Activated CD4-positive, alpha-beta T cell treated with anti-CD3 and anti-CD28 coated beads for 36 hours (primary cell): ENCODE measurements at regions of chr6 and their contacts with region 1.

Region 1: GRCh38 chr6:42390228-42390934 is 61.3 kb downstream of the TRERF1 start:
- DNase-seq: peak; percentile 85
- ATAC-seq: peak; percentile 89
- H3K4me3 Mint-ChIP-seq: peak overlapping the region; percentile 63
- H3K27ac Mint-ChIP-seq: peak overlapping the region; percentile 97
- H3K4me1 Mint-ChIP-seq: peaks cover 98% of the 10 kb centered on the region
- H3K27me3 Mint-ChIP-seq: no peaks in the 10 kb centered on the region

Region 2: GRCh38 chr6:42251500-42251899 is 138.9 kb before region 1 on chr6:
- CTCF ChIA-PET with region 1: no interaction called
- POLR2A ChIA-PET with region 1: no interaction called
- intact Hi-C with region 1: no loop called
- DNase-seq: no peak
- ATAC-seq: no peak
- H3K4me3 Mint-ChIP-seq: no peak overlapping the region
- H3K27ac Mint-ChIP-seq: no peak overlapping the region
- H3K4me1 Mint-ChIP-seq: peaks cover 5% of the 10 kb centered on the region
- H3K27me3 Mint-ChIP-seq: no peaks in the 10 kb centered on the region

Region 3: GRCh38 chr6:42352856-42353564 is 37.4 kb before region 1 on chr6:
- CTCF ChIA-PET with region 1: interaction called, 5 read pairs
- POLR2A ChIA-PET with region 1: interaction called, 10 read pairs
- intact Hi-C with region 1: loop called in 1 of 2 experiments (anchors 1 kb)
- DNase-seq: no peak
- ATAC-seq: no peak
- H3K4me3 Mint-ChIP-seq: no peak overlapping the region
- H3K27ac Mint-ChIP-seq: no peak overlapping the region
- H3K4me1 Mint-ChIP-seq: peaks cover 17% of the 10 kb centered on the region
- H3K27me3 Mint-ChIP-seq: no peaks in the 10 kb centered on the region

Region 4: DNA sequence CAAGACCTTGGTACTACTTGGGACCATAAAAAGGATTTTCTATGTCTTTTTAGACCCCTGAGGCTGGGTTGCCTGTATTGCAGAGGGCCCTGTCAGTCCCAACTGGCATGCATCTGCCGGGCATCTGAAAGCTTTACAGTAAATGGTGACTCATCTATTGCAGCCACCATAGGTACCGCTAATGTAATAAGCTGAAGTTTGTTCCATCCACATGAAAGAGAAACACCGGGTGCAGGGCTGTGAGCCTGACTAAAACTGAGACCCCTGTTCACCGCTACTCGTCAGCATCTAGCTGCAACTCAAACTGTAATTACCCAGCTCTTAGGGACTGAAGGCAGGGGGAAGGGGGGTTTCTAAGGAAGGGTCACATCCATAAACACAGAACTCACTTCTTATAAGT is 11.8 kb after region 1 on chr6:
- CTCF ChIA-PET with region 1: interaction called, 16 read pairs
- POLR2A ChIA-PET with region 1: interaction called, 11 read pairs
- intact Hi-C with region 1: loop called (anchors 1 kb)
- DNase-seq: peak; percentile 78
- ATAC-seq: peak; percentile 85
- H3K4me3 Mint-ChIP-seq: peak overlapping the region; percentile 18
- H3K27ac Mint-ChIP-seq: peak overlapping the region; percentile 69
- H3K4me1 Mint-ChIP-seq: peaks cover 83% of the 10 kb centered on the region
- H3K27me3 Mint-ChIP-seq: no peaks in the 10 kb centered on the region

Region 5: GRCh38 chr6:42453031-42453653 is 62.8 kb after region 1 on chr6:
- CTCF ChIA-PET with region 1: interaction called, 6 read pairs
- POLR2A ChIA-PET with region 1: interaction called, 7 read pairs
- intact Hi-C with region 1: loop called (anchors 1 to 5 kb)
- DNase-seq: peak; percentile 87
- ATAC-seq: peak; percentile 76
- H3K4me3 Mint-ChIP-seq: peak overlapping the region; percentile 83
- H3K27ac Mint-ChIP-seq: no peak overlapping the region
- H3K4me1 Mint-ChIP-seq: peaks cover 34% of the 10 kb centered on the region
- H3K27me3 Mint-ChIP-seq: peaks cover 5% of the 10 kb centered on the region

Region 6: GRCh38 chr6:42745707-42746462 is 355.5 kb after region 1 on chr6 and contains the start of gene TBCC:
- CTCF ChIA-PET with region 1: no interaction called
- POLR2A ChIA-PET with region 1: no interaction called
- intact Hi-C with region 1: no loop called
- DNase-seq: peak; percentile 97
- ATAC-seq: peak; percentile 84
- H3K4me3 Mint-ChIP-seq: peak within 1 kb of the TSS; percentile 84
- H3K27ac Mint-ChIP-seq: peak within 1 kb of the TSS; percentile 100
- H3K4me1 Mint-ChIP-seq: peaks cover 27% of the 10 kb centered on the region
- H3K27me3 Mint-ChIP-seq: no peaks in the 10 kb centered on the region
- total RNA-seq, gene TBCC: 14.7 to 15.3 TPM